ENCODE measurements at regions of chr4 and their contacts with region 1.

Region 1: GRCh38 chr4:99894161-99894997 is at the start of gene LAMTOR3:
- DNase-seq: peak; percentile 88
- ATAC-seq: peak; percentile 98
- H3K4me3 ChIP-seq: peak within 1 kb of the TSS; percentile 99
- H3K27ac ChIP-seq: peak within 1 kb of the TSS; percentile 96
- H3K4me1 ChIP-seq: peaks cover 4% of the 10 kb centered on the region
- H3K27me3 ChIP-seq: no peaks in the 10 kb centered on the region
- CTCF ChIP-seq: no peak
- POLR2A ChIP-seq: peak; percentile 69
- RAD21 ChIP-seq: no peak
- total RNA-seq, gene LAMTOR3: 35.7 and 56.1 TPM in 2 replicates

Region 2: DNA sequence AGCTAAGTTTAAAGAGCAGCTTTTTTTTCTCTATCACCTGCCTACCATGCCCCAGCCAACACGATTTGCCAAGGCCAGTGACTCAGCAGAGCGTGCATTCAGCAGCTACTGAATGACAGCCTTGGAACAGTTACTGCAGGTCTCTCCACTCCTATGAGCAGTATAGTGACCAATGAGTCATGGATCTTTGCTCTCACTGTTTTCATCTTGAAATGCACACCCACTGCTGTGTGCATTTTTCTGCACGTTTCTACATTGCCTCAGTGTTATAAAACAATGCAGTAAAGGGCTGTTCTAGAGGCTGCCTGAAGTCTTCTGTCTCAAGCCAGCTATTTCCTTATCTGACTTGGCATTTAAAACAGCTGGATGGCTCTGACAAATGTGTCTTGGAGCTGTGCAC is 170.8 kb before region 1 on chr4:
- CTCF ChIA-PET with region 1: no interaction called
- POLR2A ChIA-PET with region 1: no interaction called
- dilution Hi-C with region 1: no loop called
- in situ Hi-C with region 1: no loop called
- intact Hi-C with region 1: loop called (anchors 5 kb)
- DNase-seq: peak; percentile 88
- ATAC-seq: peak; percentile 93
- H3K4me3 ChIP-seq: no peak overlapping the region
- H3K27ac ChIP-seq: no peak overlapping the region
- H3K4me1 ChIP-seq: peaks cover 6% of the 10 kb centered on the region
- H3K27me3 ChIP-seq: no peaks in the 10 kb centered on the region
- CTCF ChIP-seq: no peak
- POLR2A ChIP-seq: no peak
- RAD21 ChIP-seq: no peak

Region 3: DNA sequence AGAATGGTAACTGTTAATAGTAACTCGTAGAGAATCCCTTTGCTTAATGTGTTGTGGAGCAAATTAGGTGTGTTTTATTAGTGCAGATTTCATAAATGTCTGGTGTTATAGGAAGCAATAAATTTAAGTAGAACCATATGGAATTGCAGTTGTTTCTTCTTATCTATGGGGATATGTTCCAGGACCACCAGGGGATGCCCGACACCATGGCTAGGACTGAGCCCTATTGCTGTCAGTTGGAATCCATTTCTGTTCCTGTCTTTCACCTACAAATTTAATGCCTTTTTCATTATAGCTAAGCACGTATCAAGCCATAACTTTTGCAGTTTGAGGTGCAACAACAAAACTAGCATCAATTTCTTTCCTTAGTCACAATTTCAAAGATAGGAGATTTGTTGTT is 223.4 kb after region 1 on chr4:
- CTCF ChIA-PET with region 1: no interaction called
- POLR2A ChIA-PET with region 1: no interaction called
- dilution Hi-C with region 1: no loop called
- in situ Hi-C with region 1: no loop called
- intact Hi-C with region 1: no loop called
- DNase-seq: no peak
- ATAC-seq: no peak
- H3K4me3 ChIP-seq: no peak overlapping the region
- H3K27ac ChIP-seq: no peak overlapping the region
- H3K4me1 ChIP-seq: no peaks in the 10 kb centered on the region
- H3K27me3 ChIP-seq: no peaks in the 10 kb centered on the region
- CTCF ChIP-seq: peak; percentile 34
- POLR2A ChIP-seq: no peak
- RAD21 ChIP-seq: peak; percentile 36; the same call in 1 of the 2 replicates